HepG2 (cell line): ENCODE measurements at regions of chr9 and their contacts with region 1.

Region 1: GRCh38 chr9:22469928-22470544 is 23.4 kb downstream of the DMRTA1 start:
- DNase-seq: peak; percentile 24
- ATAC-seq: peak; percentile 83
- H3K4me3 ChIP-seq: no peak overlapping the region
- H3K27ac ChIP-seq: no peak overlapping the region
- H3K4me1 ChIP-seq: no peaks in the 10 kb centered on the region
- H3K27me3 ChIP-seq: no peaks in the 10 kb centered on the region
- CTCF ChIP-seq: peak; percentile 68
- EP300 ChIP-seq: no peak
- POLR2A ChIP-seq: no peak
- RAD21 ChIP-seq: no peak

Region 2: GRCh38 chr9:23492126-23493002 is 1022.3 kb after region 1 on chr9:
- CTCF ChIA-PET with region 1: no interaction called
- POLR2A ChIA-PET with region 1: no interaction called
- in situ Hi-C with region 1: no loop called
- intact Hi-C with region 1: loop called (anchors 5 kb)
- DNase-seq: peak; percentile 31
- ATAC-seq: peak; percentile 90
- H3K4me3 ChIP-seq: no peak overlapping the region
- H3K27ac ChIP-seq: no peak overlapping the region
- H3K4me1 ChIP-seq: no peaks in the 10 kb centered on the region
- H3K27me3 ChIP-seq: no peaks in the 10 kb centered on the region
- CTCF ChIP-seq: peak; percentile 63
- EP300 ChIP-seq: no peak
- POLR2A ChIP-seq: no peak
- RAD21 ChIP-seq: no peak

Region 3: DNA sequence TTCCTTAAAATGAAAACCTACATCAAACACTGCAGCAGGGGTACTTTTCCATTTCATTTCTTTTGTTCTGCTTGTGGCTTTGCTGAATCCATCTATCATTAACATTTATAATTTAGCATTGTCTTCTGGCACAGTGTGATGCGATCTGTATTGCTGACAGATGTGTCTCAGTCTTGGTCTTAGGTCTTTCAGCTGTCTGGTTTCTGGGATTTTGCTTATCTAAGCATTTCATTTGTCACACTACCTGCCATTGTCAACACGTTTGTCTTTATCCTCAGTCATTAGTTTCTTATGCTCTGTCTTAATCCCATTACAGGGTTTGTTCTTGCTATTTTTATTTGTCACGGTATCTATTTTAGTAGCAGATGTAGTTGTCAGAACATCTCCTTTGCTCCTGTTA is 1772.5 kb after region 1 on chr9:
- CTCF ChIA-PET with region 1: no interaction called
- POLR2A ChIA-PET with region 1: no interaction called
- in situ Hi-C with region 1: no loop called
- intact Hi-C with region 1: loop called (anchors 5 kb)
- DNase-seq: no peak
- ATAC-seq: no peak
- H3K4me3 ChIP-seq: no peak overlapping the region
- H3K27ac ChIP-seq: no peak overlapping the region
- H3K4me1 ChIP-seq: no peaks in the 10 kb centered on the region
- H3K27me3 ChIP-seq: no peaks in the 10 kb centered on the region
- CTCF ChIP-seq: no peak
- EP300 ChIP-seq: no peak
- POLR2A ChIP-seq: no peak
- RAD21 ChIP-seq: no peak